Natural killer cell (primary cell): ENCODE measurements at regions of chr3 and their contacts with region 1.

Region 1: GRCh38 chr3:170869645-170870593 is at the start of gene RPL22L1:
- DNase-seq: peak; percentile 89 to 97
- ATAC-seq: peak; percentile 92 to 96 (median 95)
- H3K4me3 ChIP-seq: peak within 1 kb of the TSS; percentile 59
- H3K4me3 Mint-ChIP-seq: peak within 1 kb of the TSS; percentile 100
- H3K27ac ChIP-seq: peak within 1 kb of the TSS; percentile 82
- H3K27ac Mint-ChIP-seq: peak within 1 kb of the TSS; percentile 98 to 100
- H3K4me1 ChIP-seq: peaks cover 14% of the 10 kb centered on the region
- H3K4me1 Mint-ChIP-seq: peaks cover 30% of the 10 kb centered on the region in 2 donors
- H3K27me3 ChIP-seq: no peaks in the 10 kb centered on the region
- H3K27me3 Mint-ChIP-seq: no peaks in the 10 kb centered on the region
- CTCF ChIP-seq: no peak
- total RNA-seq, gene RPL22L1: 41.9 to 53.8 (median 44.8) TPM

Region 2: GRCh38 chr3:169772897-169773828 is 1096.8 kb before region 1 on chr3 and contains the start of gene MYNN:
- intact Hi-C with region 1: loop called (anchors 5 kb)
- DNase-seq: peak; percentile 93 to 97
- ATAC-seq: peak; percentile 81 to 95 (median 87)
- H3K4me3 ChIP-seq: peak within 1 kb of the TSS; percentile 99
- H3K4me3 Mint-ChIP-seq: peak within 1 kb of the TSS; percentile 99
- H3K27ac ChIP-seq: peak within 1 kb of the TSS; percentile 100
- H3K27ac Mint-ChIP-seq: peak within 1 kb of the TSS; percentile 100
- H3K4me1 ChIP-seq: no peaks in the 10 kb centered on the region
- H3K4me1 Mint-ChIP-seq: peaks cover 51 to 53% of the 10 kb centered on the region in 2 donors
- H3K27me3 ChIP-seq: no peaks in the 10 kb centered on the region
- H3K27me3 Mint-ChIP-seq: no peaks in the 10 kb centered on the region
- CTCF ChIP-seq: no peak
- total RNA-seq, gene MYNN: 19.5 to 29.9 (median 29.2) TPM

Region 3: DNA sequence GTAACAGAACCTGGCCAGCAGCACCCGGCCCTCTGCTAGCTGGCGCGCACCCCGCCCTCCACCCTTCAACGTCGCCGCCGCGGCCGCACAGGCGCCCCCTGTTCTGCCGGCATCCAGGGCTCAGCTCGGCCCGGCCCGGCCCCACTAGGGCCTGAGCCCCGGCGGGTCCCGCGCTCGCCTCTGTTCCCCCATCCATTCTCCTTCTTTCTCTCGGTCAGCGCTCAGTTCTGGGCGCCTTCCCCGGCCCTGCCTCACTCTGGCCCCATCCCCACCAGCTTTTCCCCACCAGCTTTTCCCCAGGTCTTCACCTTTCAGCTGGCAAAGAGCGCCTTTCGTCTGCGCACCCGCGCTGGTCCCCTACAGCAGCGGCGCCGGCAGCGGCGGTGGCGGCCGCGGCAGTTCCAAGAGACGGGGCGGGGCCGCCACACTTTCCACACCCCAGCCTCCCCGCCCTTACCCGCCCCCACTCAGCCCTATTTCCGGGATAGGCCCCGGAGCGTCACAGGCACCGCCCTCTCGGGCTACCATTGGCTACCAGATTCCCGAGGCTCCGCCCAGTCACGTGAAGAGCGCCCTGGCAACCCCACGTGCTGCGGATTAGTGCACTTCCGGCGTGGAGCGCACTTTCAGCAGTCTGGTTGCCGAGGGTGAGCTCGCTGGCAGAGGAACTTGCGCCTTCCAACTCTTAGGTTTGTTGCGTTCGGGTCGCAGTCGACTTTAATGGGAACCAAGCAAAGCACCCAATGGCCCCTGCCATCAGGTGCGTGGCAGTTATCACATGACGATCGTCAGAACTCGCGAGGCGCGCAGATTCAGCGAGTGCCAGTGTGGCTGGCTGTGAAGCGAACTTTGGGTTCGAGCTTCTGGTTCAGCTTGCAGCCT is 38.6 kb after region 1 on chr3 and contains the start of gene EIF5A2:
- intact Hi-C with region 1: loop called (anchors 1 kb)
- DNase-seq: peak; percentile 91 to 98
- ATAC-seq: peak; percentile 92 to 98 (median 94)
- H3K4me3 ChIP-seq: peak within 1 kb of the TSS; percentile 71
- H3K4me3 Mint-ChIP-seq: peak within 1 kb of the TSS; percentile 98
- H3K27ac ChIP-seq: peak within 1 kb of the TSS; percentile 80
- H3K27ac Mint-ChIP-seq: peak within 1 kb of the TSS; percentile 87 to 89
- H3K4me1 ChIP-seq: peaks cover 14% of the 10 kb centered on the region
- H3K4me1 Mint-ChIP-seq: peaks cover 23 to 29% of the 10 kb centered on the region in 2 donors
- H3K27me3 ChIP-seq: no peaks in the 10 kb centered on the region
- H3K27me3 Mint-ChIP-seq: no peaks in the 10 kb centered on the region
- CTCF ChIP-seq: no peak
- total RNA-seq, gene EIF5A2: 12.9 to 34.8 (median 22.8) TPM